ENCODE measurements at regions of chr12 and their contacts with region 1.

Region 1: DNA sequence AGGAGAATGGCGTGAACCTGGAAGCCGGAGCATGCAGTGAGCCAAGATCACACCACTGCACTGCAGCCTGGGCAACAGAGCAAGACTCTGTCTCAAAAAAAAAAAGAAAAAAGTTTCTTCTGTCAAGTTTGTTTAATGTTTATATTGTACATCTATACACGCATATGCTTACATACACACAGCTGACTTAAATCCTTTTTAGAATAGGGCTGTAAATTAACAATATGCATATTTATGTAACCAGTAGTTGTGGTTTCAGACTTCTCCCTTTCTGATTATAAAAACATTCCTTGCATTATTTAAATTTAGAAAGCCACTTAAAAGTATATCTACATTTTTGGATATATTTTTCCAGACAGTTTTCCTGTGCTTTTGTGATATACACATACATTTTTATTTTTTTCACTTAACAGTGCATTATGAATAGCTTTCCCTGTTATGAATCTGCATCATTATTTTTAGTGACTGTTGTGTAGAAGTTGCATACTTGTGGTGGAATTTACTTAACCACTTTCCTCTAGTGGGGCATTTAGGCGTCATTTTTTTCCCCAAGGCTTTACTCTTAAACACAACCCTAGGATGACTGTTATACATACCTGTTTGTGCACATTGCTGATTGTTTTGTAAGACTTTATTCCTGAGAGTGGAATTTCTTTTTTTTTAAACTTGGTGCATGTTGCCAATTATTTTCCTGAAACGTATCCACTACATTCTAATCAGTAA is 29.4 kb downstream of the POLR3B start:
- DNase-seq: no peak
- CTCF ChIP-seq: no peak

Region 2: GRCh38 chr12:106084014-106084671 is 302.8 kb before region 1 on chr12:
- in situ Hi-C with region 1: no loop called
- DNase-seq: no peak
- CTCF ChIP-seq: no peak

Region 3: GRCh38 chr12:106601031-106601430 is 214.1 kb after region 1 on chr12:
- in situ Hi-C with region 1: no loop called
- DNase-seq: no peak
- CTCF ChIP-seq: no peak

Region 4: DNA sequence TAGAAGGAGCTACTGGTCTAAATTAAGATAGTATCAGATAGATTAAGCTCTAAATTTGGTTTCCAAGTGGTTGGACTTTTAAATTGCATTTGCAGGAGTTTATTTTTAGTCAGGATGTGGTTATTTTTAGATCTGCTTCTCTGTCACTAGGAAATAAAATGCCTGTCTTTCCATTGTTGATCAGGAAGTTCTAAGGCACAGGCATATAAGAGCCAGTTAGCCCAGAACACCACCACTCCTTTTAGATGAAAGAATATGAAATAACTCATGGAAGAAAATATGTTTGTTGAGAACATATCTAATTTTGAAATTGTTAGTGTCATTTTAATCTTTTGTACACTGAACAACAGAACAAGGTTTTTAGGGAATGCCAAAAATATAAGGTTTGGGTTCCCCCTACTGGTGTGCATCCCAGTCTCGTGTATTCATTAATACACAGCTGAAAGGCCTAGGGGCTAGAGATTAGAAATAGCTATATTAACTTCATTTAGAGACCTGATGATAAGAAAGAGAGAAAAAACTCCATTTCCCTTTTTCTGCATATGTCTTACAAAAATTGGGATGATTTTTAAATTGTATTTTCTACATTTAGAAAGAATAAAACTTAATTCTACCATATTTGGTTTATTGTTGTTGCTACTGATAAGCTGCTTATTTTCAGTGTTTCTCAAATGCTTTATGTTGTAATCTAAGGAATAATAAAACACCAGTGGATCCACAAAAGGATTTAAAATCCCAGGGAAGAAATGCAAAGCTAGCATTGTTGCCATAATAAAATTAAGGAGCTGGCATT is 454.7 kb after region 1 on chr12:
- in situ Hi-C with region 1: loop called (anchors 25 kb)
- DNase-seq: peak; percentile 39
- CTCF ChIP-seq: peak; percentile 68

Region 5: DNA sequence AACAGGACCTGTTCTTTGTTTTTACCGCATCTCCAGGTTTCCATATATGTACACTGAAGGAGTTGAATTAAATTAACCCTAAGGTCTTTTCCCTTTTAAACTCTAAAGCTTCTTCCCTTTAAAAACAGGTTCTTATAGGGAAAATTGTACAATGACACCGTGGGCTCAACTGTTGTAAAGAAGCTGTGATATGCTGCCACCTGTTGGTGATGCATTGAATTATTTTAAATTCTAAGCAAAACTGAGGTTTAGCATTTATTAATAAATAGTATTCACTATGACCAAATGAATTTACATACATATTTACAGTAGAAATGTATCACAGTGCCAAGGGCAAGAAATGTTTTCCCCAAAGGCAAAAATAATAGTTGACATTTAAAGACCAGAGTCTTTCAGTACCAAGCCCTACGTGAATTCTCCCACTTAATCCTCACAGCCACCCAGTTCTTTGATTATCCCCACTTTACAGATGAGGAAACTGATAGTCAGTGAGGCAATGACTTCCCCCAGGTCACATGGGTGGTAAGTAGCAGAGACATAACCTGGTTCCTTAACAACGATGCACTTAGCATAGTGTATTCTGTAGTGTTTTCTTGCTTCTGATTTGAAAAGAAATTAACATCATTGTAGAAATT is 533.1 kb after region 1 on chr12:
- in situ Hi-C with region 1: loop called (anchors 10 kb)
- DNase-seq: no peak
- CTCF ChIP-seq: peak; percentile 74